ENCODE measurements at regions of chr20 and their contacts with region 1.

Region 1: GRCh38 chr20:10553326-10553984 is 118.3 kb downstream of the SLX4IP start:
- DNase-seq: peak; percentile 43 to 74 (median 50)
- ATAC-seq: peak; percentile 91
- H3K4me3 ChIP-seq: no peak overlapping the region
- H3K27ac ChIP-seq: no peak overlapping the region
- H3K4me1 ChIP-seq: peaks cover 0 to 27% of the 10 kb centered on the region in 2 donors
- H3K27me3 ChIP-seq: no peaks in the 10 kb centered on the region
- CTCF ChIP-seq: peak; percentile 68 to 69

Region 2: DNA sequence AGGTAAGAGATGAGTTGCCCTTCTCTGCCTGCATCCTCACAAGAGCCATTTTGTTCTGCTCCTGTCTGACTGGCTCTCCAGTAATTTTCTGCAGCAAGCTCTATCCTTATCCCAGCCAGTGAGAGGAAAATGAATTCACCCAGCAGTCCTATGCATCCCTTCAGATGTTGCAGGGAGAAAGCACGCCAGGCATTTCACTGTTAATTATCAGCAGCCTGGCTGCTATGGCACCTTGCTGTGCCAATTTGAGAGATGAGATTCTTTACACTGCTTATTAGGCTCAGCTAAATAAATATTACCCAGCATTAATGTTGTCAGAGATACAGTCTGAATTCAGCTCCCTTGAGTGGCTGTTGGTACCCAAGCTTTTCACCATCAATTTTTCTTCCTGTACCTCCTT is 395.9 kb before region 1 on chr20:
- intact Hi-C with region 1: no loop called
- DNase-seq: no peak
- ATAC-seq: no peak
- H3K4me3 ChIP-seq: no peak overlapping the region
- H3K27ac ChIP-seq: no peak overlapping the region
- H3K4me1 ChIP-seq: no peaks in the 10 kb centered on the region
- H3K27me3 ChIP-seq: no peaks in the 10 kb centered on the region
- CTCF ChIP-seq: no peak

Region 3: DNA sequence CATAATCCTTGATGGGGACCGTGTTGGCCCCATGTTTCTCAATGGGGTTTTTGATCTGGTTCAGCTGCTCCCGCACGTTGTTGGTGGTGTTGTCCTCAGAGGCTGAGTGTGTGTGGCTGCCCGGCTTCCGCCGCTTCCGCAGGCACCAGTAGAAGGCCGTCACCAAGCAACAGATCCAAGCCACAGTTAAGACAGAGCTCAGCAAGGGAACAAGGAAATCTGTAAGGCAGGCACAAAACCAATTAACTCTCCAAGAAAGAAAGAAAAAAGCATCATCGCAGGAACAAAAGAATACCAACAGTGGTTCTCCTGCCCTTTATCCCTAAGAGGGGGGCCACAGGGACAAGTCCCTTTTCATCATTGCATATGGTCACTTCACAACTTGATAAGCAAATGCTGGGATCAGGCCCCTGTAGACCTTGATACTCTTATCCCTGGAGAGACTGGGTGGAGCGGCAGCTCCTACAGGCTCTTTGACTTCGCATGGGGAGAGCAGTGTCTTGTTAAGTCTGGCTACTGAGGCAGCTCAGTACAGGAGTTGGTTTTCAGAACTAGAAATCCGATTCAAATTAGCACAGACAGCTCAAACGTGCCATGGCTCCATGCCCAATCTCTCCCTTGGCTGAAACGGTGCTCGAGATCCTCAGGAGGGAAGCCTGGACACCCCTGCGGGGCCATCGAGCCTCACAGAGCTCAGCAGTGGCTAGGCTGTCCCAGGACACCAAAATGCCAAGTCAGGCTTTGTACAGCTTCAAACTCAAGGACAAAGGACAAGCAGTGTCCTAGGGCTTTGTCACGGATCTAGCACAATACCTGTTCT is 86.5 kb after region 1 on chr20:
- intact Hi-C with region 1: no loop called
- DNase-seq: no peak
- ATAC-seq: no peak
- H3K4me3 ChIP-seq: no peak overlapping the region
- H3K27ac ChIP-seq: no peak overlapping the region
- H3K4me1 ChIP-seq: peaks cover 9 to 14% of the 10 kb centered on the region in 2 donors
- H3K27me3 ChIP-seq: no peaks in the 10 kb centered on the region
- CTCF ChIP-seq: no peak

Region 4: DNA sequence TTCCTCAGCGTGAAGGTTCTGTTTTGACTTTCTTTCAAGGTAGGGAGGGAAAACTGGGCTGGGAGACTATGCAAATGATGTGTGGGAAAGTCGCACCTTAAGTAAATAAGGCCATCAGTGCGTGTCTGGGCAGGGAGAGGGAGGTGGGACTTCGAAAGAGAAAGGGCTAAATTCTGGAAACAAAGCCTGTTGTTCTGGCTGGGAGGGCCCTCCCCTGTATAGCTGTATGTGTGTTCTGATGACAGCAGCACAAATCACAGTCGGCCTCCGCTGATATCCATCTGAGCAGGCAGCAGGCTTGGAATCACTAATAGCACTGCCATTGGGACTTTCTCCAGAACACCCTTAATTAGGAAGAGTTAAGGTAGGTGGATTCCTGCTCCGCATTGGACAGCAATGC is 101.2 kb after region 1 on chr20:
- intact Hi-C with region 1: loop called in 1 of 2 experiments (anchors 10 kb)
- DNase-seq: no peak
- ATAC-seq: peak; percentile 16
- H3K4me3 ChIP-seq: no peak overlapping the region
- H3K27ac ChIP-seq: peak overlapping the region in 1 of 2 donors; percentile 49
- H3K4me1 ChIP-seq: peaks cover 15 to 34% of the 10 kb centered on the region in 2 donors
- H3K27me3 ChIP-seq: no peaks in the 10 kb centered on the region
- CTCF ChIP-seq: no peak